Activated CD4-positive, alpha-beta T cell treated with anti-CD3 and anti-CD28 coated beads for 36 hours (primary cell): ENCODE measurements at regions of chr19 and their contacts with region 1.

Region 1: GRCh38 chr19:52139252-52140031 is at the start of gene ZNF616:
- DNase-seq: peak; percentile 90
- ATAC-seq: peak; percentile 81
- H3K4me3 Mint-ChIP-seq: peak within 1 kb of the TSS; percentile 96
- H3K27ac Mint-ChIP-seq: peak within 1 kb of the TSS; percentile 97
- H3K4me1 Mint-ChIP-seq: peaks cover 27% of the 10 kb centered on the region
- H3K27me3 Mint-ChIP-seq: no peaks in the 10 kb centered on the region
- total RNA-seq, gene ZNF616: 13.9 to 15.7 TPM

Region 2: DNA sequence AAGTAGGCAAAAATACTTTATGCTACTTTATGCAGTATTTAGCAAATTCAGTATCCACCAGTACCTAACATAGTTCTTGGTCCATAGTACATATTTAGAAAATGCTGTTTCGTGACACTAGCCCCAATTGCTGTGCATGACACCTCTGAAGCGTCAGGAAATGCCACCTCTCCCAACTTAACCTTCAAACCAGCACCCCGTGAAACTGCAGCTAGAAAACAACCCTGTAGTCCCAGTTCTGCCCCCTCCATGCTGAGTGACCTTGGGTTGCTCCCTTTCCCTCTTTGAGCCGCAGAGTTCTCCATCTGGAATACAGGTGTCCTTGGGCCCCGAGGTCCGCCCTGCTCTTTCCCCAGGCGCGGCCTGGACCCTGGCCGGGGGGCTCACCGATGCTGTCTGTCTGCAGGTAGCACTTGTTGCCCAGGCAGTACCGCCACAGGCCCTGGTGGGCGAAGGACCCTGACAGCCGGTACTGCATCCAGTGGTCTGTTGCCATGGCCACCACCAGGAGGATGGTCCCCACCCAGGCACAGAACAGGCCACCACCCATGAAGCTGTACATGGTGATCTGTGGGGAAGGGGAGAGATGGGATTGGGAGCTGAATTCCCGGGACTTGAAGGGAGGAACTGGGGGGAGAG is 752.4 kb before region 1 on chr19:
- CTCF ChIA-PET with region 1: no interaction called
- POLR2A ChIA-PET with region 1: no interaction called
- intact Hi-C with region 1: no loop called
- DNase-seq: no peak
- ATAC-seq: no peak
- H3K4me3 Mint-ChIP-seq: peak overlapping the region; percentile 13
- H3K27ac Mint-ChIP-seq: peak overlapping the region; percentile 12
- H3K4me1 Mint-ChIP-seq: peaks cover 6% of the 10 kb centered on the region
- H3K27me3 Mint-ChIP-seq: no peaks in the 10 kb centered on the region

Region 3: GRCh38 chr19:51837145-51837544 is 302.3 kb before region 1 on chr19:
- CTCF ChIA-PET with region 1: no interaction called
- POLR2A ChIA-PET with region 1: no interaction called
- intact Hi-C with region 1: no loop called
- DNase-seq: no peak
- ATAC-seq: no peak
- H3K4me3 Mint-ChIP-seq: no peak overlapping the region
- H3K27ac Mint-ChIP-seq: no peak overlapping the region
- H3K4me1 Mint-ChIP-seq: no peaks in the 10 kb centered on the region
- H3K27me3 Mint-ChIP-seq: no peaks in the 10 kb centered on the region

Region 4: DNA sequence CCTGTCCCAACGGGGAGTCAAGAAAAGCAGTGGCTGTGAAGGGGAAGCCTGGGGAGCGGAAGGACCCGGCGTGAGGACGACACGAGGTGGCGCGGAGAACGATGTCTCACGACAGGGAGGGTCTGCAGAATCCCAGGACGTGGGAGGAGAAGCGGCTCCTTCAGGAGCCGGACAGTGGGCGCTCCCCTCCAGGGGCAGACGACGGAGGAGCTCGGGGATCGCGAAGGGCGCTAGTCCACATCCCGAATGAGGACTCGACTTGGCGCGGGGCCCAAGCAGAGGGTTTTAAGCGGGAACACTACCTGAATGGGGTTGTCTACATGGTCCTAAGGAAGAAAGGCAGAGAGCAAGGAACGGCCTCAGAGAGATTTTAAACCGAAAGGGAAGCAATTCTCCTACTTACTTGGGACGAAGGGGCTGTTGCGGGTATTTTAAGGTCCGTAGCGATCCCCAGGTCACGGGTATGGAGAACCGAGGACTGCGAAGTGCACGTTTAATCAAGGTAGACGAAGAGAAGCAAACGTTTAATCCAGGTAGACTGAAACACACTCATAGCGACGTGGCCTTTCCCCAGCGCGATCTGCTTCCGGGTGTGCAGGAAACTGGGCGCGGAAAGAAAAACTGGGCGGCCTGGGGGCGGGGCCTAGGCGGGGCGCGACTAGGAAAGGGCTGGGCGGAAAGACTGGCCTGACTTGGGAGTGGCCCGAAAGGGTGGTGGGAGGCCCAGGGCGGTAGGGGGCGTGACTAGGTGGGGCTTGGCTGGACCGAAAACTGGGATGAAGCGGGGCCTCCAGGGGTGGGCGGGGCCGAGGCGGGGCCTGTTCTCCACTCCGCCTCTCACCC is 44.0 kb before region 1 on chr19 and contains the start of gene ZNF841:
- CTCF ChIA-PET with region 1: no interaction called
- POLR2A ChIA-PET with region 1: no interaction called
- intact Hi-C with region 1: loop called in 1 of 2 experiments (anchors 1 kb)
- DNase-seq: peak; percentile 96
- ATAC-seq: peak; percentile 98
- H3K4me3 Mint-ChIP-seq: peak within 1 kb of the TSS; percentile 94
- H3K27ac Mint-ChIP-seq: peak within 1 kb of the TSS; percentile 95
- H3K4me1 Mint-ChIP-seq: peaks cover 22% of the 10 kb centered on the region
- H3K27me3 Mint-ChIP-seq: no peaks in the 10 kb centered on the region
- total RNA-seq, gene ZNF841: 18.0 to 20.3 TPM

Region 5: DNA sequence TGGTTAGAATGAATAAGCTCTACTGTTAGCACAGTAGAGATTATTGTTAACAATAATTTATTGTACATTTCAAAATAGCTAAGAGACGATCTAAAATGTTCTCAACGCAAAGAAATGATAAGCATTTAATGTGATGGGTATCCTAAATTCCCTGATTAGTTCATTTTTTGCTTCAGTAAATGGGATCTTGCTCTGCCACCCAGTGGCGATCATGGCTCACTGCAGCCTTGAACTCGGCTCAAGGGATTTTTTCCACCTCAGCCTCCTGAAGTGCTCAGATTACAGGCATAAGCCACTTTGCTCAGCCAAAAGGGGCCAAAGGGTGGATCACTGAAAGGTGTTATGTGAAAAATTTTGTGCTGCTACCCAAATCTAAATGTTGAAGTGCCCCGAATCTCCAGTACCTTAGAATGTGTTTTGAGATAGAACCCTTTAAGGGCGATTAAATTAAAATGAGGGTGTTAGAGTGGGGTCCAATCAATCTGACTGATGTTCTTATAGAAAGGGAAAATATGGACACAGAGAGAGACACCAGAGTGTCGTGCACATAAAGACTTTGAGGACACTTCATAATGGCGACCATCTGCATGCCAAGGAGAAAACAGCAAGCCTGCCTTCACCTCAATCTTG is 98.4 kb after region 1 on chr19:
- CTCF ChIA-PET with region 1: interaction called, 9 read pairs
- POLR2A ChIA-PET with region 1: no interaction called
- intact Hi-C with region 1: loop called (anchors 1 kb)
- DNase-seq: peak; percentile 73
- ATAC-seq: peak; percentile 65
- H3K4me3 Mint-ChIP-seq: no peak overlapping the region
- H3K27ac Mint-ChIP-seq: no peak overlapping the region
- H3K4me1 Mint-ChIP-seq: no peaks in the 10 kb centered on the region
- H3K27me3 Mint-ChIP-seq: no peaks in the 10 kb centered on the region

Region 6: DNA sequence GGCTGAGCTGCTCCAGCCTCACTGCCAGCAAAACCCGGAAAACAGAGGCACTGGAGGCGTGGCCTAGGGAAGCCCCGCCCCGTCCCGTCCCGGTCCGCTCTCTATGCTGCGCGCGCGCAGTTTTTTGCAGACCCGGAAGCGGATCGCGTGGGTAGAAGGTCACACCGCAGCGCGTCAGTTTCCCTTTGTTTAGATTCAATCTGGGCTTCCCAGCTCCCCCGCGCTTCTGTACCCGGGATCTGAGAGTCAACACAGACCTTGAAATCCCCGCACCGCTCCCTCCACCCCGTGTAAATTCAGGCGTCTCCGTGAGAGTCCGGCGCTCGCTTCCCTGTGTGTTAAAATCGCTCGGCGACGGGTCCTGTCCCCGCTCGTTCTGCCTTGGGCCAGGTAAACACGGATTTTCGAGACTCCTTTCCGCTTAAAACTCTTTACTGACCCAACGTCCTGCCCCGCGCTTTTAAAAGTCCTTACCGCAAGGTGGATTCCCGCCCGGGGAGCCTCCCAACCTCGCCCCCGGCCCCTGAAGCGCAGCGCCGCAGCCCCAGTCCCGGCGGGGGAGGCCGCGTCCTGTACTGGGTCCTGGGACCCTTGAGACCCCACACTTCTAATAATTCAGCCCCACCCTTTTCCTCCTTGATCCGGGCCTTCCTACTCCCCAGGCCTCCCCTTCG is 196.8 kb after region 1 on chr19 and contains the start of gene ZNF610:
- CTCF ChIA-PET with region 1: no interaction called
- POLR2A ChIA-PET with region 1: no interaction called
- intact Hi-C with region 1: loop called in 1 of 2 experiments (anchors 1 kb)
- DNase-seq: peak; percentile 96
- ATAC-seq: peak; percentile 97
- H3K4me3 Mint-ChIP-seq: peak within 1 kb of the TSS; percentile 97
- H3K27ac Mint-ChIP-seq: peak within 1 kb of the TSS; percentile 96
- H3K4me1 Mint-ChIP-seq: peaks cover 10% of the 10 kb centered on the region
- H3K27me3 Mint-ChIP-seq: no peaks in the 10 kb centered on the region
- total RNA-seq, gene ZNF610: 2.3 to 3.3 TPM

Region 7: GRCh38 chr19:52535771-52536447 is 396.5 kb after region 1 on chr19:
- CTCF ChIA-PET with region 1: no interaction called
- POLR2A ChIA-PET with region 1: no interaction called
- intact Hi-C with region 1: loop called in 1 of 2 experiments (anchors 2 kb)
- DNase-seq: peak; percentile 97
- ATAC-seq: peak; percentile 94
- H3K4me3 Mint-ChIP-seq: peak overlapping the region; percentile 83
- H3K27ac Mint-ChIP-seq: peak overlapping the region; percentile 94
- H3K4me1 Mint-ChIP-seq: peaks cover 28% of the 10 kb centered on the region
- H3K27me3 Mint-ChIP-seq: no peaks in the 10 kb centered on the region